ENCODE measurements at regions of chr6 and their contacts with region 1.

Region 1: DNA sequence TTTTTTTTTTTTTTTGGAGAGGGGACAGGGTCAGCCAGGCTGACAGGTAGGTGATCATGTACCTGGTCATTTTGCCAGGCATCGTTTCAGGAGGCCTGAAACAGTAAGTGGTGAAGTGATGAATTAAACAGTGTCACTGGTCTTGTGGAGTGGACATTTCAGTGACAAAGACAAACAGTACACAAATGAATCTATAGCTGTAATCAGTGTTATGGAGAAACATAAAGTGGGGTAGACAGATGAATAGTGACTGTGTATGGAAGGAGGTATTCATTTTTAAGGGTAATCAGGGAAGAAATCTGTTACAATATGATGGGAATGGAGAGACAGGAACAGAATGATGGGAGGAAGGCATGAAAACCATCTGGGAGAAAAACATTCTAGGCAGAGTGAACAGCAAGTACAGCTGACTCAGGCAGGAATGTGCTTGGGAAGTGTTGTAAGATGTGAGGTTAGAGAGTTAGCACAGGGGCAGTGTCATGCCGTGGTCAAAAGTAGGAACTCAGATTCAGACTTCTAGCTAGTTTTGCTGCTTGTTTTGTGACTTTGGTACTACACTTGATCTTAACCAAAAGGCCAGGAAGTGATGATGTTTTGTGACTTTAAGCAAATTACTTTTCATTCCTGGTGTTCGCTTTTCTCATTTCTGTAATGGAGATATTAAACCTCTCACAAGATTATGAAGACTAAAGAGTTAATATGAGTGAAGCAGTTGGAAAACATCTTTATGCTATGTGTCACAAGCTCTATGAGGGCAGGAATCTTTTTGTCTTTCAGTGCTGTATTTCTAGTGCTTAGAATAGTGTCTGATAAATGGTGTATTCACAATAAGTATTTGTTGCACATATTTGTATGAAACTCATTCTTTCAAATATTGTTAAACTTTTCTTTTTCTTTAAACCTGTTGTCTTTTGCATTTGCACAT is 43.4 kb downstream of the QKI start:
- DNase-seq: peak; percentile 60 to 70 (median 62)
- H3K4me3 ChIP-seq: no peak overlapping the region
- H3K4me3 Mint-ChIP-seq: no peak overlapping the region
- H3K27ac ChIP-seq: peak overlapping the region in 1 of 2 donors; percentile 47
- H3K27ac Mint-ChIP-seq: peak overlapping the region; percentile 45 to 86 (median 75)
- H3K4me1 ChIP-seq: peaks cover 30 to 51% of the 10 kb centered on the region in 2 donors
- H3K4me1 Mint-ChIP-seq: peaks cover 56% of the 10 kb centered on the region
- H3K27me3 ChIP-seq: no peaks in the 10 kb centered on the region
- H3K27me3 Mint-ChIP-seq: no peaks in the 10 kb centered on the region
- CTCF ChIP-seq: no peak

Region 2: GRCh38 chr6:163419413-163420288 is 38.2 kb before region 1 on chr6:
- intact Hi-C with region 1: loop called in 1 of 2 experiments (anchors 5 kb)
- DNase-seq: no peak
- H3K4me3 ChIP-seq: peak overlapping the region in 1 of 3 experiments; percentile 97
- H3K4me3 Mint-ChIP-seq: peak overlapping the region in 1 of 2 donors; percentile 6
- H3K27ac ChIP-seq: peak overlapping the region in 1 of 2 donors; percentile 8
- H3K27ac Mint-ChIP-seq: peak overlapping the region in 4 of 7 donors; percentile 46 to 55 (median 49)
- H3K4me1 ChIP-seq: peaks cover 35 to 67% of the 10 kb centered on the region in 2 donors
- H3K4me1 Mint-ChIP-seq: peaks cover 65% of the 10 kb centered on the region
- H3K27me3 ChIP-seq: no peaks in the 10 kb centered on the region
- H3K27me3 Mint-ChIP-seq: peaks cover 0 to 3% (median 0%) of the 10 kb centered on the region in 3 donors
- CTCF ChIP-seq: no peak

Region 3: DNA sequence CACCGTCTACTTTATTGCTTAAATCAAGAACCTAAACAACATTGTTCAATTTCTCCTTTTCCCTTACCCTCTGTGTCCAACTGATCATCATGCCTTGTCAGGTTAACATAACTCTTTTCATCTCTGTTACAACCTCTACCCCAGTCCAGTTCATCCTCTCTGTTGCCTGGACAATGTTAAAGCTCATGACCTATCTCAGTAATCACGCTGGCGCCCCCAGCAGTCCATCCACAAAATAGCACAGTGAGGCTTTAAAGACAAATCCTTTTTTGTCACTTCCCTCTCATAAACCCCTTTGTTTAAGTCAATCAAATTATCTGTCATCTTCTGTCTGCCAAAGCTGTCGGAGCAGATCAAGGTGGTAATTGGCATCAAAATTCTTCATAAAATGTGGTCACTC is 96.8 kb after region 1 on chr6:
- intact Hi-C with region 1: no loop called
- DNase-seq: peak; percentile 32 to 55 (median 52)
- H3K4me3 ChIP-seq: no peak overlapping the region
- H3K4me3 Mint-ChIP-seq: no peak overlapping the region
- H3K27ac ChIP-seq: peak overlapping the region in 1 of 2 donors; percentile 27
- H3K27ac Mint-ChIP-seq: peak overlapping the region in 4 of 7 donors; percentile 25 to 74 (median 45)
- H3K4me1 ChIP-seq: no peaks in the 10 kb centered on the region
- H3K4me1 Mint-ChIP-seq: peaks cover 3% of the 10 kb centered on the region
- H3K27me3 ChIP-seq: no peaks in the 10 kb centered on the region
- H3K27me3 Mint-ChIP-seq: peaks cover 0 to 1% (median 0%) of the 10 kb centered on the region in 3 donors
- CTCF ChIP-seq: peak; percentile 71

Measured in CD14-positive monocyte (primary cell).